K562 (cell line): ENCODE measurements at regions of chr5 and their contacts with region 1.

Region 1: GRCh38 chr5:671459-672328 is 21.5 kb downstream of the TPPP start:
- DNase-seq: peak; percentile 79 to 83 (median 82)
- ATAC-seq: peak; percentile 88
- H3K4me3 ChIP-seq: no peak overlapping the region
- H3K27ac ChIP-seq: no peak overlapping the region
- H3K4me1 ChIP-seq: peaks cover 4 to 77% of the 10 kb centered on the region in 2 experiments; a peak in 4 of 5 replicates
- H3K27me3 ChIP-seq: no peaks in the 10 kb centered on the region
- CTCF ChIP-seq: peak; percentile 91 to 96 (median 93)
- EP300 ChIP-seq: no peak
- POLR2A ChIP-seq: peak; percentile 55
- RAD21 ChIP-seq: peak; percentile 85 to 91

Region 2: GRCh38 chr5:773517-774264 is 102.0 kb after region 1 on chr5:
- CTCF ChIA-PET with region 1: no interaction called
- POLR2A ChIA-PET with region 1: no interaction called
- in situ Hi-C with region 1: loop called (anchors 5 kb)
- intact Hi-C with region 1: no loop called
- DNase-seq: peak in 2 of 4 experiments; percentile 2 to 3
- ATAC-seq: no peak
- H3K4me3 ChIP-seq: no peak overlapping the region
- H3K27ac ChIP-seq: no peak overlapping the region
- H3K4me1 ChIP-seq: peaks cover 0 to 24% of the 10 kb centered on the region in 2 experiments; a peak in 3 of 5 replicates
- H3K27me3 ChIP-seq: peaks cover 0 to 21% of the 10 kb centered on the region in 2 experiments; a peak in 2 of 5 replicates
- CTCF ChIP-seq: no peak
- EP300 ChIP-seq: no peak
- POLR2A ChIP-seq: no peak
- RAD21 ChIP-seq: no peak

Region 3: GRCh38 chr5:849651-850301 is 178.1 kb after region 1 on chr5:
- CTCF ChIA-PET with region 1: no interaction called
- POLR2A ChIA-PET with region 1: no interaction called
- in situ Hi-C with region 1: no loop called
- intact Hi-C with region 1: loop called (anchors 10 kb)
- DNase-seq: peak in 2 of 4 experiments; percentile 49 to 52
- ATAC-seq: peak; percentile 6; the same call in 1 of the 3 replicates
- H3K4me3 ChIP-seq: no peak overlapping the region
- H3K27ac ChIP-seq: no peak overlapping the region
- H3K4me1 ChIP-seq: peaks cover 0 to 29% of the 10 kb centered on the region in 2 experiments; a peak in 2 of 5 replicates
- H3K27me3 ChIP-seq: peaks cover 26 to 57% of the 10 kb centered on the region in 2 experiments
- CTCF ChIP-seq: no peak
- EP300 ChIP-seq: no peak
- POLR2A ChIP-seq: no peak
- RAD21 ChIP-seq: no peak

Region 4: GRCh38 chr5:902129-902916 is 230.6 kb after region 1 on chr5:
- CTCF ChIA-PET with region 1: interaction called, 12 read pairs
- POLR2A ChIA-PET with region 1: no interaction called
- in situ Hi-C with region 1: loop called (anchors 5 kb)
- intact Hi-C with region 1: loop called (anchors 2 kb)
- DNase-seq: no peak
- ATAC-seq: no peak
- H3K4me3 ChIP-seq: no peak overlapping the region
- H3K27ac ChIP-seq: no peak overlapping the region
- H3K4me1 ChIP-seq: no peaks in the 10 kb centered on the region
- H3K27me3 ChIP-seq: no peaks in the 10 kb centered on the region
- CTCF ChIP-seq: no peak
- EP300 ChIP-seq: no peak
- POLR2A ChIP-seq: no peak
- RAD21 ChIP-seq: no peak

Region 5: DNA sequence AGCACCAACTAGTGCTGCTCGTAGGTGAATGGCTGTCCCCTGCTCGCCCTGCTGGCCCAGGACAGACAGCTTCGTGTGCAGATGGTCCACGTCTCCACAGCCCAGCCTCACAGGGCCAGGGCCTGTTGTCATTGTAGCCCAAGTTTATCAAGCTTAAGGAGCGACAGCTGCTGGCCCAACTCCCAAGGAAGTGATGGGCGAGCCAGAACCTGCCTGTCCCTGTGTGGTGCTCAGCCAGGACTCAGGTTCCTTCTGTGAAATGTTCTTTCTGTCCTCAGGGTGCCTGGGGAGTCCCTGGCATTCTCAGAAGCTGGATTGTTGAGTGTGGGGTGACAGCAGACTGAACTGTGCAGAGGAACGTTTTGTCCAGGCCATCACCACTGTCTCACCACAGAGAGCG is 237.4 kb after region 1 on chr5:
- CTCF ChIA-PET with region 1: interaction called, 12 read pairs
- POLR2A ChIA-PET with region 1: no interaction called
- in situ Hi-C with region 1: loop called (anchors 5 kb)
- intact Hi-C with region 1: no loop called
- DNase-seq: no peak
- ATAC-seq: no peak
- H3K4me3 ChIP-seq: no peak overlapping the region
- H3K27ac ChIP-seq: no peak overlapping the region
- H3K4me1 ChIP-seq: no peaks in the 10 kb centered on the region
- H3K27me3 ChIP-seq: no peaks in the 10 kb centered on the region
- CTCF ChIP-seq: no peak
- EP300 ChIP-seq: no peak
- POLR2A ChIP-seq: no peak
- RAD21 ChIP-seq: no peak